ENCODE measurements at regions of chr5 and their contacts with region 1.

Region 1: DNA sequence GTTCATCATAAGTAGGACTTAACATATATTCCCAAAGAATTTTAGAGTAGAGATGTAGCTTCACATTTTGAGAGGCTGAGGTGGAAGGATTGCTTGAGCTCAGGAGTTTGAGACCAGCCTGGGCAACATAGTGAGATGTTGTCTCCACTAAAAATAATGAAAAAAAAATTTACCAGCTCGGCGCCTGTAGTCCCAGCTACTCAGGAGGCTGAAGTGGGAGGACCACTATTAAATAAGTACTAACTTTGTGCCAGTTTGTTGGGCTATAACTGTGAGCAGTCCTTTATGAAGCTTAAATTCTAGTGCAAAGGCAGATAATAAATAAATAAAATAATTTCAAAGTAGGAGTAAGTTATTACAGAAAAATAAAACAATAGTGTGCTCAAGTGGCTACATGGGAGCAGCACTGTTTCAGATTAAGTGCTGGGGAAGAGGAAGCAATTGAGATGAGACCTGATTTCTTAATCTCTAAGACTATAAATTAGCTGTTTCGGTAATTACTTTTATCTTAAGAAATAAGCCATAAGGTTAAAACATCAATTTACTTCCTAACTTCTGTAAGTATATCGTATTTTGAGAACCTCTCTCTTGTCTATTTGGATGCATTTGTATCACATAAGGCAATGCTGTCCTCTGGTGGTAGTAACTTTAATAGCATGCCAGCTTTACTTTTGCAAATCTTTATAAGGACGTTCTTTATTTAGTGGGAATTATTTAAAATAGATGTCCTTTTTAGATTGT is 98.9 kb downstream of the CSNK1G3 start:
- DNase-seq: peak; percentile 80
- ATAC-seq: peak; percentile 81
- H3K4me3 ChIP-seq: no peak overlapping the region
- H3K27ac ChIP-seq: no peak overlapping the region
- H3K4me1 ChIP-seq: no peaks in the 10 kb centered on the region
- H3K27me3 ChIP-seq: no peaks in the 10 kb centered on the region
- CTCF ChIP-seq: peak; percentile 98
- POLR2A ChIP-seq: no peak
- RAD21 ChIP-seq: peak; percentile 93

Region 2: GRCh38 chr5:122896598-122897282 is 714.1 kb before region 1 on chr5:
- CTCF ChIA-PET with region 1: no interaction called
- POLR2A ChIA-PET with region 1: no interaction called
- dilution Hi-C with region 1: no loop called
- in situ Hi-C with region 1: no loop called
- intact Hi-C with region 1: loop called (anchors 5 kb)
- DNase-seq: peak; percentile 85
- ATAC-seq: peak; percentile 91
- H3K4me3 ChIP-seq: no peak overlapping the region
- H3K27ac ChIP-seq: no peak overlapping the region
- H3K4me1 ChIP-seq: peaks cover 3% of the 10 kb centered on the region; the same call in 1 of the 2 replicates
- H3K27me3 ChIP-seq: no peaks in the 10 kb centered on the region; the same call in 1 of the 2 replicates
- CTCF ChIP-seq: peak; percentile 61
- POLR2A ChIP-seq: no peak
- RAD21 ChIP-seq: peak; percentile 65

Region 3: GRCh38 chr5:123423278-123424149 is 187.3 kb before region 1 on chr5 and contains the start of gene CEP120:
- CTCF ChIA-PET with region 1: interaction called, 13 read pairs
- POLR2A ChIA-PET with region 1: no interaction called
- dilution Hi-C with region 1: no loop called
- in situ Hi-C with region 1: loop called (anchors 10 kb)
- intact Hi-C with region 1: loop called (anchors 1 kb)
- DNase-seq: peak; percentile 99
- ATAC-seq: peak; percentile 99
- H3K4me3 ChIP-seq: peak within 1 kb of the TSS; percentile 87
- H3K27ac ChIP-seq: peak within 1 kb of the TSS; percentile 68
- H3K4me1 ChIP-seq: no peaks in the 10 kb centered on the region; the same call in 1 of the 2 replicates
- H3K27me3 ChIP-seq: no peaks in the 10 kb centered on the region
- CTCF ChIP-seq: peak; percentile 94
- POLR2A ChIP-seq: peak; percentile 65; the same call in 1 of the 2 replicates
- RAD21 ChIP-seq: peak; percentile 64
- total RNA-seq, gene CEP120: 16.4 and 46.1 TPM in 2 replicates

Region 4: DNA sequence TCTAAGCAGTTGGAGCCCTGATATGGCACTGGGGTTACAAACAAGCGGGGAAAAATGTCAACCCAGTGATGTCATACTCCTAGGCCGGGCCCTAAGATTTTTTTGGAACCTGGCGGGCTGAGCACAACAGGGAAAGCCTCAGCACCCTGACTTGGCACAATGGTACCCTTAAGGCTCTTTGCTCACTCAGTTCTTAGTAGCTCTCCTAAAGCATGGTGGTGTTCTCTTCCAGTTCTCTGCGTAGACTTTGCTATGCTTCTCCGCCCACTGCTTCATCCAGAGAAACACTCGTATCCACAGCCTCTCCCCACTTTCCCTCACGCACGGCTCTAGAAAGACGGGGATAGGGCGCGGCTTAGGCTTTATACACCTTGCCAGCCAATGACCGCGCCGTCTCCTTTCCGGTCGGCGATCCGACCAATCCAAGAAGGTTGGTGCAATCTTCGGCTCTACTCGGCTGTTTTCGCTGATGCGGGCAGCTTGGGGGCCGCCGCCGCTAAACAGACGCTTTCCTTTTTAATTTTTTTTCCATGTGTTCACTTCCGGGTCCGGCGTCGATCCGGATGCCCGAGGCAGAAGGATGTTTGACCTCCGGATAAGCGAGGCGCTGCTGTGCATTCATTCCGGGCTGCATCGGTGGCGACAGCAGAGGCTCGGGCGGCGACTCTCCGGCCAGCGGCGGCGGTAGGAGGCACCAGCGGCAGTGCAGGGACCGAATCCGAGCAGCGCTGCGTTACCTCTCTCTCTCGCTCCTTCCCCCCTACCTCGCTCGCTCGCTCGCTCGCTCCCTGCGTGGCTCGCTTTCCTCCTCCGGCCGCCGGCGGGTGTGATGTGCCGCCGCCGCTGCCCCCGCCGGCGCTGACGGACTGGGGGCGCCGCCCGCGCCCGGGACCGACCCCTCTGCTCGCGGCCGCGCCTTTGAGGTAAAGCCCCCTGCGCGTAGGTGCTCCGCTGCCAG is 98.9 kb before region 1 on chr5 and contains the start of gene CSNK1G3:
- CTCF ChIA-PET with region 1: interaction called, 3 read pairs
- POLR2A ChIA-PET with region 1: no interaction called
- dilution Hi-C with region 1: no loop called
- in situ Hi-C with region 1: no loop called
- intact Hi-C with region 1: loop called (anchors 2 kb)
- DNase-seq: peak; percentile 97
- ATAC-seq: peak; percentile 96
- H3K4me3 ChIP-seq: peak within 1 kb of the TSS; percentile 74
- H3K27ac ChIP-seq: peak within 1 kb of the TSS; percentile 90
- H3K4me1 ChIP-seq: peaks cover 2% of the 10 kb centered on the region; the same call in 1 of the 2 replicates
- H3K27me3 ChIP-seq: no peaks in the 10 kb centered on the region
- CTCF ChIP-seq: no peak
- POLR2A ChIP-seq: peak; percentile 97
- RAD21 ChIP-seq: no peak
- total RNA-seq, gene CSNK1G3: 26.2 and 45.3 TPM in 2 replicates

Region 5: DNA sequence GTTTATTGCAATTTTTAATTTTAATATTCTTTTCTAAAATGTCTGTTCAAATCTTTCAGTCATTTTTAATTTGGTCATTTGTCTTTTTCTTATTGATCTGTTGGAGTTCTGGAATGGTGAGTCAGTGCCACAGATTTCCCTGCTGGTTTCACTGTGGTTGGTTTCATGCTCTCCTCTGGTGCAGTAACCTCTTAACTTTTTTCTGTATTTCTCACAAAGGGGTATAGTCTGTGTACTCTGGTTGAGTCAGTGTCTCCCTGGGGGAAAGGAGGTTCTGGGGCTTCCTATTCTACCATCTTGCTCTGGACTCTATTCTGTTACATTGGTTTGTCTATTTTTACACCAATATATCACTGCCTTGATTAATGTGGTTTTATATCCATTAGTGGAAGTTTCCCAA is 80.0 kb after region 1 on chr5:
- CTCF ChIA-PET with region 1: no interaction called
- POLR2A ChIA-PET with region 1: no interaction called
- dilution Hi-C with region 1: no loop called
- in situ Hi-C with region 1: no loop called
- intact Hi-C with region 1: no loop called
- DNase-seq: peak; percentile 17
- ATAC-seq: no peak
- H3K4me3 ChIP-seq: no peak overlapping the region
- H3K27ac ChIP-seq: no peak overlapping the region
- H3K4me1 ChIP-seq: peaks cover 3% of the 10 kb centered on the region
- H3K27me3 ChIP-seq: no peaks in the 10 kb centered on the region
- CTCF ChIP-seq: no peak
- POLR2A ChIP-seq: no peak
- RAD21 ChIP-seq: no peak

Region 6: DNA sequence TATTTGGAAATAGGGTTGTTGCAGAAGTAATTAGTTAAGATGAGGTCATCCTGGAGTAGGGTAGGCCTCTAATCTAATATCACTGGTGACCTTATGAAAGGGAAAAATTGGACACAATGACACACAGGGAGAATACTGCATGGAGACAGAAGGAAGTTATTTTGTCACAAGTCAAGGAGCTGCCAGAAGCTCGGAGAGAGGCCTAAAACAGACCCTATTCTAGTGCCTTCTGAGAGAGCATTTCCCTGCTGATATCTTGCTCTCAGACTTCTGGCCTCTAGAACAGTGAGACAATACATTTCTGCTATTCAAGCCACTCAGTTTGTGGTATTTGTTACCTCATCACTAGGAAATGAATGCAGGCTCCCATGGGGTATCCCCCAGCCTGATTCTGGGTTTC is 234.0 kb after region 1 on chr5:
- CTCF ChIA-PET with region 1: no interaction called
- POLR2A ChIA-PET with region 1: no interaction called
- dilution Hi-C with region 1: no loop called
- in situ Hi-C with region 1: no loop called
- intact Hi-C with region 1: no loop called
- DNase-seq: peak; percentile 5
- ATAC-seq: peak; percentile 68; the same call in 1 of the 2 replicates
- H3K4me3 ChIP-seq: no peak overlapping the region
- H3K27ac ChIP-seq: no peak overlapping the region
- H3K4me1 ChIP-seq: no peaks in the 10 kb centered on the region
- H3K27me3 ChIP-seq: no peaks in the 10 kb centered on the region
- CTCF ChIP-seq: no peak
- POLR2A ChIP-seq: no peak
- RAD21 ChIP-seq: no peak

Measured in IMR-90 (cell line).